ENCODE measurements at regions of chr19 and their contacts with region 1.

Region 1: GRCh38 chr19:42108527-42109389 is 23.5 kb downstream of the POU2F2 start:
- DNase-seq: peak; percentile 83 to 94 (median 91)
- ATAC-seq: peak; percentile 99
- H3K4me3 ChIP-seq: no peak overlapping the region
- H3K4me3 Mint-ChIP-seq: no peak overlapping the region
- H3K27ac ChIP-seq: no peak overlapping the region
- H3K27ac Mint-ChIP-seq: peak overlapping the region; percentile 20
- H3K4me1 ChIP-seq: peaks cover 4% of the 10 kb centered on the region
- H3K4me1 Mint-ChIP-seq: peaks cover 8% of the 10 kb centered on the region
- H3K27me3 ChIP-seq: no peaks in the 10 kb centered on the region
- H3K27me3 Mint-ChIP-seq: no peaks in the 10 kb centered on the region
- CTCF ChIP-seq: peak; percentile 100

Region 2: GRCh38 chr19:41934849-41935374 is 173.8 kb before region 1 on chr19:
- CTCF ChIA-PET with region 1: no interaction called
- POLR2A ChIA-PET with region 1: no interaction called
- intact Hi-C with region 1: no loop called
- DNase-seq: peak; percentile 63 to 89 (median 81)
- ATAC-seq: peak; percentile 37
- H3K4me3 ChIP-seq: no peak overlapping the region
- H3K4me3 Mint-ChIP-seq: peak overlapping the region; percentile 32
- H3K27ac ChIP-seq: no peak overlapping the region
- H3K27ac Mint-ChIP-seq: peak overlapping the region; percentile 84
- H3K4me1 ChIP-seq: peaks cover 45% of the 10 kb centered on the region
- H3K4me1 Mint-ChIP-seq: peaks cover 55% of the 10 kb centered on the region
- H3K27me3 ChIP-seq: peaks cover 0 to 5% of the 10 kb centered on the region in 2 experiments
- H3K27me3 Mint-ChIP-seq: no peaks in the 10 kb centered on the region
- CTCF ChIP-seq: peak; percentile 87

Region 3: GRCh38 chr19:42121656-42122069 is 12.9 kb after region 1 on chr19:
- CTCF ChIA-PET with region 1: interaction called, 42 read pairs
- POLR2A ChIA-PET with region 1: no interaction called
- intact Hi-C with region 1: no loop called
- DNase-seq: peak; percentile 24 to 90 (median 81)
- ATAC-seq: peak; percentile 89
- H3K4me3 ChIP-seq: peak overlapping the region; percentile 19 to 27
- H3K4me3 Mint-ChIP-seq: peak overlapping the region; percentile 66
- H3K27ac ChIP-seq: peak overlapping the region; percentile 36 to 82
- H3K27ac Mint-ChIP-seq: peak overlapping the region; percentile 95
- H3K4me1 ChIP-seq: peaks cover 49% of the 10 kb centered on the region
- H3K4me1 Mint-ChIP-seq: peaks cover 59% of the 10 kb centered on the region
- H3K27me3 ChIP-seq: no peaks in the 10 kb centered on the region
- H3K27me3 Mint-ChIP-seq: no peaks in the 10 kb centered on the region
- CTCF ChIP-seq: no peak

Region 4: DNA sequence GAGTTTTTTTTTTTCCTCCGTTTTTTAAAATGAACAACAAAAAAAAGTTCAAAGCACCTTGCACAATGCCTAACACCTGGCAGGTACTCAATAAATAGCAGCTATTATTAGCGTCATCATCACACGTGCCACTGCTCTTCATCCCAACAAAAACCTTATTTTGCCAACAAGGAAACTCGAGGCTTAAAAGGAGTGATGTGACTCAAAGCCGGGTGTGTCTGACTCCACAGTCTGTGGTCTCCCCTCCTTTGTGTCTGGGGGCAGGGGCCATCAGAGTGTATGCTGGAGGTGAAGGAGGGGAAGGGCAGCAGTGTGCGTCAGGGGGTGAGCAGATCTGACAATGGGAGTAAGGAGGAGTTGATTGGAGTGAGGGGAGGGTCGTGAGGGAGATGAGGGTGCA is 57.6 kb after region 1 on chr19:
- CTCF ChIA-PET with region 1: interaction called, 15 read pairs
- POLR2A ChIA-PET with region 1: interaction called, 6 read pairs
- intact Hi-C with region 1: no loop called
- DNase-seq: no peak
- ATAC-seq: no peak
- H3K4me3 ChIP-seq: no peak overlapping the region
- H3K4me3 Mint-ChIP-seq: no peak overlapping the region
- H3K27ac ChIP-seq: no peak overlapping the region
- H3K27ac Mint-ChIP-seq: no peak overlapping the region
- H3K4me1 ChIP-seq: no peaks in the 10 kb centered on the region
- H3K4me1 Mint-ChIP-seq: no peaks in the 10 kb centered on the region
- H3K27me3 ChIP-seq: no peaks in the 10 kb centered on the region
- H3K27me3 Mint-ChIP-seq: no peaks in the 10 kb centered on the region
- CTCF ChIP-seq: no peak

Region 5: DNA sequence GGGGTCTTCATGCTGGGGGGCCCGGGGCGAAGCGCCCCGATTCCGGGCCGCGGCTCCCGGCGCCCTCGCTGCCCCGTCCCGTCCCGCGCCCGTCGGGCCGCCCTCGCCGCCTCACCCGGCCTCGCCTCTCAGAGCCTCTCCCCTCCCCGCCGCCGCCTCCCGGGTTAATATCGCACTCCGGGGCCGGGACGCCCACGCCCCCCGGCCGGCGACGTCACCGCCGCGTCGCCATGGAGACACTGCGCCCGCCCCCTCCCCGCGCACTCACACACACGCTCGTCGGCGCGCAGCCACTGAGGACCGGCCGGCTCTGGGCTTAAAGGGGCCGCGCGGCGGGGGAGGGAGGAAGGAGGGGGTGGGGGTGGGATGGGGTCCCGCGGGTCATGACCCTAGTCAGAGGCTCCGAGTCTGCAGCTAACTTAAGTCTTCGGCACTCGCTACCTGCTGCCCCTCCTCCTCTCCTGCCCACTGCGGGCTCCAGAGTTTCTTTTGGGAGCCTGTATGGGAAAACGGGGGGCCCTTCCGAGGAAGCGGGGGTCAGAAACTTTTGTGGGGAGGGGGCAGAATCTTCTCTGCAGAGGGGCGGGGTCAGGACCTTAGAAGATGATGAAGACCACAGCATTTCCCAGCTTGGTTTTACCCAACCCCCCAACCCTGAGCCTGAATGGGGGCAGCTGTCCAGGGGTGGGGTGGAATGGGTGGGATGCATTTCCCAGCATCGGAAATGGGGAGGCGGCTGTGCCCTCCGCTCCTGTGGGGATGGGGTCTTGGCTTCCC is 146.4 kb after region 1 on chr19 and contains the start of gene ERF:
- CTCF ChIA-PET with region 1: interaction called, 10 read pairs
- POLR2A ChIA-PET with region 1: no interaction called
- intact Hi-C with region 1: no loop called
- DNase-seq: peak; percentile 89 to 97 (median 93)
- ATAC-seq: peak; percentile 71
- H3K4me3 ChIP-seq: peak within 1 kb of the TSS; percentile 85 to 97
- H3K4me3 Mint-ChIP-seq: peak within 1 kb of the TSS; percentile 86
- H3K27ac ChIP-seq: peak within 1 kb of the TSS; percentile 96 to 97
- H3K27ac Mint-ChIP-seq: peak within 1 kb of the TSS; percentile 87
- H3K4me1 ChIP-seq: peaks cover 36% of the 10 kb centered on the region
- H3K4me1 Mint-ChIP-seq: peaks cover 27% of the 10 kb centered on the region
- H3K27me3 ChIP-seq: no peaks in the 10 kb centered on the region
- H3K27me3 Mint-ChIP-seq: no peaks in the 10 kb centered on the region
- CTCF ChIP-seq: no peak
- total RNA-seq, gene ERF: 92.1 to 95.1 TPM

Region 6: GRCh38 chr19:42325273-42325895 is 216.6 kb after region 1 on chr19 and contains the start of gene MEGF8:
- CTCF ChIA-PET with region 1: interaction called, 12 read pairs
- POLR2A ChIA-PET with region 1: no interaction called
- intact Hi-C with region 1: loop called (anchors 1 kb)
- DNase-seq: peak; percentile 96 to 99 (median 98)
- ATAC-seq: peak; percentile 93
- H3K4me3 ChIP-seq: peak within 1 kb of the TSS; percentile 85 to 98
- H3K4me3 Mint-ChIP-seq: peak within 1 kb of the TSS; percentile 97
- H3K27ac ChIP-seq: peak within 1 kb of the TSS; percentile 36 to 56
- H3K27ac Mint-ChIP-seq: peak within 1 kb of the TSS; percentile 88
- H3K4me1 ChIP-seq: peaks cover 12% of the 10 kb centered on the region
- H3K4me1 Mint-ChIP-seq: peaks cover 24% of the 10 kb centered on the region
- H3K27me3 ChIP-seq: peaks cover 4 to 7% of the 10 kb centered on the region in 2 experiments
- H3K27me3 Mint-ChIP-seq: peaks cover 12% of the 10 kb centered on the region
- CTCF ChIP-seq: peak; percentile 66
- total RNA-seq, gene MEGF8: 5.2 to 5.9 TPM

Region 7: DNA sequence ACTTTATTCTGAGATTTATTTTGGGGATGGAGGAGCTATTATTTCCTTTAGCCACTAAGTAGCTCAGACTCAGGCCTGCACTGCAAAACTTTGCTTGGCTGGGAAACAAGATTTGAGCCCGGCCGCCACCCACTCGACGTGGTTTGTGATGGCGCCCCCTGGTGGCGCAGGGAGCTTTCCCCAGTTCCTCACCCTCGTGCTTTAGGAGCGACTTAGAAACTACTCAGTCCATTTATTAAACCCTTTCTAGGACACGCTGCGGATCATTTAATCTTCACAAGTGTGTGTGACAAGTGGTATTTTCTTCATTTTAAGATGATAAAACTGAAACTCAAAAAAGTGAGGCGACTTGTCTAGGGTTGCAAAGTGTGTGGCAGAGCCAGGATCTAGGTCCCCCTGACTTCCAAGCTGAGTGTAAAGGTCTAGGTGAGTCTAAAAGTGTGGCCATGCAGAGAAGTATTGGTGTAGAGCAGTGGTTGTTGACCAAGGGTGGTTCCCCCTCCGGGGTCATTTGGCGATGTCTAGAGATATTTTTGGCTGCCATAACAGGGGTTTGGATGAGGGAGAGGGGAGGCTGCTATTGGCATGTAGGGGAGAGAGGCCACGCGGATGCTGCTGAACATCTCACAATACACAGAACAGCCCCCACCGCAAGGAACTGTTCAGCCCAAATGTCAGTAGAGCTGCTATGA is 331.7 kb after region 1 on chr19:
- CTCF ChIA-PET with region 1: interaction called, 12 read pairs
- POLR2A ChIA-PET with region 1: no interaction called
- intact Hi-C with region 1: loop called in 1 of 2 experiments (anchors 1 kb)
- DNase-seq: peak; percentile 69 to 88 (median 80)
- ATAC-seq: peak; percentile 43
- H3K4me3 ChIP-seq: no peak overlapping the region
- H3K4me3 Mint-ChIP-seq: no peak overlapping the region
- H3K27ac ChIP-seq: no peak overlapping the region
- H3K27ac Mint-ChIP-seq: peak overlapping the region; percentile 4
- H3K4me1 ChIP-seq: peaks cover 15% of the 10 kb centered on the region
- H3K4me1 Mint-ChIP-seq: peaks cover 20% of the 10 kb centered on the region
- H3K27me3 ChIP-seq: no peaks in the 10 kb centered on the region
- H3K27me3 Mint-ChIP-seq: no peaks in the 10 kb centered on the region
- CTCF ChIP-seq: peak; percentile 96

Measured in CD8-positive, alpha-beta T cell (primary cell).